ENCODE measurements at regions of chr20 and their contacts with region 1.

Region 1: GRCh38 chr20:56358596-56359211 is at the start of gene FAM210B:
- DNase-seq: peak; percentile 94 to 97 (median 96)
- ATAC-seq: peak; percentile 87
- H3K4me3 ChIP-seq: peak within 1 kb of the TSS; percentile 81
- H3K27ac ChIP-seq: peak within 1 kb of the TSS; percentile 81
- H3K4me1 ChIP-seq: peaks cover 34 to 52% of the 10 kb centered on the region in 2 experiments
- H3K27me3 ChIP-seq: no peaks in the 10 kb centered on the region
- CTCF ChIP-seq: no peak
- EP300 ChIP-seq: no peak
- POLR2A ChIP-seq: no peak
- RAD21 ChIP-seq: no peak
- polyA plus RNA-seq, gene FAM210B: 12.1 to 21.4 TPM

Region 2: DNA sequence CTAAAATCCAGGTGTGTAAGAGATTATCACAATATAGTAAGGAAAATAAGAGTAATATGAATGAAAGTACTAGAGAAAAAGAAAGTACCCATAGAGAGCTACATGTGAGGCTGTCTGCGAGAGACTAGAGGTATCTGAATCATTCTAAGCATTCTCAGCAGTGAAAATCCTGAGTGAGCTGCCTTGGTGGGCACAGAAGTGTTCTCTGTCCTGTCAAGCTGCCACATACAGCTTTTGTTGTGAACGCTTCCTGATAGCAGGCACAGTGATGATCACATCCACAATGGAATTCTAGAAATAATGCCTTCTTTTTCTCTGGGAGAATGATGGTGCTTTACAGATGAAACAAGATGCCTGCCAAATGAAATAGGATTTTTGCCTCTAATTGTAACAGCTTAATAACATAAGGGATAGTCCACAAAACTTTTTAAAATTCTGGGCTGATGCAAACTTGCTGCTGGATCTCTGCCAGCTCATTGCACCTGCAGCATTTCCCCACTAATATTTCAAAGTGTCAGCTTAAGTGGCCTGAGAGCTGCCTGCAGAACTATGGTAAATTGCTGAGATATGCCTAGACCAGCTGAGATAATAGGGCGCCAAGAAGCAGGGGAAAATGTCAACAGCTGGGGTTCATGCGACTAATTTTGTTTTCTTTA is 1262.8 kb before region 1 on chr20:
- CTCF ChIA-PET with region 1: no interaction called
- POLR2A ChIA-PET with region 1: interaction called, 3 read pairs
- in situ Hi-C with region 1: loop called (anchors 25 kb)
- intact Hi-C with region 1: no loop called
- DNase-seq: peak in 1 of 4 experiments; percentile 16
- ATAC-seq: 0 out of 3 replicates have a peak, but pooled peaks have one; percentile 33
- H3K4me3 ChIP-seq: no peak overlapping the region
- H3K27ac ChIP-seq: no peak overlapping the region
- H3K4me1 ChIP-seq: peaks cover 0 to 22% of the 10 kb centered on the region in 2 experiments; a peak in 3 of 5 replicates
- H3K27me3 ChIP-seq: no peaks in the 10 kb centered on the region
- CTCF ChIP-seq: no peak
- EP300 ChIP-seq: no peak
- POLR2A ChIP-seq: no peak
- RAD21 ChIP-seq: no peak

Region 3: GRCh38 chr20:56392282-56393137 is 33.8 kb after region 1 on chr20 and contains the start of gene CSTF1:
- CTCF ChIA-PET with region 1: no interaction called
- POLR2A ChIA-PET with region 1: interaction called, 9 read pairs
- in situ Hi-C with region 1: no loop called
- intact Hi-C with region 1: loop called (anchors 1 kb)
- DNase-seq: peak; percentile 99 to 100 (median 100)
- ATAC-seq: peak; percentile 95
- H3K4me3 ChIP-seq: peak within 1 kb of the TSS; percentile 92
- H3K27ac ChIP-seq: peak within 1 kb of the TSS; percentile 99
- H3K4me1 ChIP-seq: peaks cover 4 to 12% of the 10 kb centered on the region in 2 experiments; a peak in 3 of 5 replicates
- H3K27me3 ChIP-seq: no peaks in the 10 kb centered on the region
- CTCF ChIP-seq: no peak
- EP300 ChIP-seq: peak; percentile 70
- POLR2A ChIP-seq: peak; percentile 77; the same call in 1 of the 2 replicates
- RAD21 ChIP-seq: no peak
- polyA plus RNA-seq, gene CSTF1: 74.1 to 110 TPM